ENCODE measurements at regions of chr21 and their contacts with region 1.

Region 1: DNA sequence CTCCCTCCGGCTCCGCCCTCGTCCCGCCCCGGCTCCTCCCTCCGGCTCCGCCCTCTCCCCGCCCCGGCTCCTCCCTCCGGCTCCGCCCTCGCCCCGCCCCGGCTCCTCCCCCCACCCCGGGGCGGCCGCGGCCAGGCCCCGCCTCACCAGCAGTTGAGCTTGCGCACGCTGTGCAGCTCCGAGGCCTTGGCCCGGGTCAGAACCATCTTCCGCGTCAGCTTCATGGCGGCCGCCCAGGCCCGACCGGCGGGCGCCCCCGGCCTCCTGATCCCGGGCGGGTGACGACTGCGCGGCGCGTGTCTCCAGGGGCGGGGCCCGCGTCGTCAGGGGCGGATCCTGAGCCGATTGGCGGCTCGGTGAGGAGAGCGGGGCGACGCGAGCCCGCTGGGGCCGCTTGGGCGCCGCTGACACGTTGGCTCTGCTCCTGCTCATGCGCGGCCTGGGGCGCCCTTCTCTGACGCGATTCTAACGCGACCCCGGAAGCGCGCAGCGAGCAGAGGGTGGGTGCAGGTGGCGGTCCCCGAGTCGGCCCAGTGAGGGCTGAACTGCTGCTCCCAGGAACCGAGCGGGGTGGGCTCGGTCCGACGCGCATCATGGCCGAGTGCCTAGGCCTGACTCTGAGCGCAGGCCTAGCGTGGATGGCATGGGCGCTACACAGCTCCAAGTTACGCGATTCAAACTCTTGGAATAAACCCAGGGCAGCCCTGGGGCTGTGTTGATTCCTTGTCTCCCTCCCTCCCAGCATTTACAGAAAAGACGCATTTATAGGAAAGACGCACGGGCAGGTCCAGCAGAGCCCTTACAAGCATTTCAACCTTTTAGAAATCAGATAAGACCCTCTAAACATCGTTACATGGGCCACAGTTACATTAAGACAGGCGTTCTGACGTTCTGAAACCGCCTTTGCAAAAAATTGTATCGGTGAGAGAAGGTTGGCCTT is at the start of gene CFAP410:
- DNase-seq: peak; percentile 96
- total RNA-seq, gene CFAP410: 15.8 TPM

Region 2: GRCh38 chr21:43758111-43758641 is 581.1 kb before region 1 on chr21:
- intact Hi-C with region 1: no loop called
- DNase-seq: no peak

Region 3: DNA sequence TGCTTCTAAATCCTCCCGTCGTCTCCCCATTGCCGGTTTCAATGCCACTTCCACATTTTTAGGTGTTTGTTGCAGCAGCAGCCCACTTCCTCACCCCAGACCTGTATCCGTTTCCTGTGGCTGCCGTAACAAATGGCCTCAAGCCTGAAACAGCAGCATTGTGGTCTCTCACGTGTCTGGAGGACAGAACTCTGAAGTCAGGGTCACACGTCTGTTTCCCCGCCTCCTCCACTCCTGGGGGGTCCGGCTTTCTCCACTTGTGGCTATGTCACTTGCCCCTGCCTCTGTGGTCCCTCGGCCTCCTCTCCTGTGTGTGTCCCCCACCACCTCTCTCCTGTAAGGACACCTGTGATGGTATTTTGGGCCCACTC is 36.0 kb after region 1 on chr21:
- intact Hi-C with region 1: no loop called
- DNase-seq: peak; percentile 89

Region 4: GRCh38 chr21:44454747-44455523 is 115.7 kb after region 1 on chr21 and contains the start of gene LRRC3:
- intact Hi-C with region 1: loop called (anchors 5 kb)
- DNase-seq: peak; percentile 89
- total RNA-seq, gene LRRC3: 2.9 TPM

Region 5: GRCh38 chr21:44613386-44614155 is 274.3 kb after region 1 on chr21:
- intact Hi-C with region 1: no loop called
- DNase-seq: no peak

Measured in cardiac septum (tissue), 1 donor.